ENCODE measurements at regions of chr3 and their contacts with region 1.

Region 1: DNA sequence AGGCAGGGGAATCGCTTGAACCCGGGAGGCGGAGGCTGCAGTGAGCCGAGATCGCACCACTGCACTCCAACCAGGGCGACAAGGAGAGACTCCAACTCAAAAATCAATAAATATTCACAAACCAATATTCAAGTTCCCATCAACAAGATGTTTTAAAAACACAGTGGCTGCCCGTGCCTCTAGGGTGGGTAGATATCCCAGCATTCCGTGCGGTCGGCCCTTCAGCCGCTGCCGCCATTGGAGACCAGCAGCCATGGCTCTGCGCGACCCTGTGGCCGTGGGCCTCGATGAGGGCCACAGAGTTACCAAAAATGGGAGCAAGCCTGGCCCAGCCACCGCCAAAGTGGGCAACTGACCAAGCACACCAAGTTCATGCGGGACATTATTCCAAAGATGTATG is 6.7 kb downstream of the ULK4 start:
- DNase-seq: no peak
- H3K4me3 ChIP-seq: no peak overlapping the region
- H3K27ac ChIP-seq: no peak overlapping the region
- H3K4me1 ChIP-seq: peaks cover 3% of the 10 kb centered on the region
- CTCF ChIP-seq: no peak

Region 2: DNA sequence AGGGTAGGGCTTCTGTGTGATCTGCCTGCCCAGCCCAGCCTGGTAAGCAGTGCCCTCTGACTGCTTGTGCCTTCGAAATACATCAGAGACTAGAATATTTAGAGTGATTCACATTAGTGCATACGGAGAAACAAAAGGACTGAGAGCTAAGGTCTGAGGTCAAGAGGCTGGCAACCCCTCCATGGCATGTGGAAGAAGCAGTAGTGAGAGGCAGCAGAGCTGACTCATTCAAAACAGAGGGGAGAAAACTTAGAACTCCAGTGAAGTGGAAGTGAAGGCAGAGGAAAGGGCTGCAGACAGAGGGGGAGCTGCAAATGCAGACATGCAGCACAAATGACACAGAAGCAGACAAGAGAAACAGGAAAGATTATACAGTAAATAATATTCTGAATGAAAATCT is 54.9 kb before region 1 on chr3:
- CTCF ChIA-PET with region 1: no interaction called
- POLR2A ChIA-PET with region 1: interaction called, 10 read pairs
- intact Hi-C with region 1: no loop called
- DNase-seq: no peak
- H3K4me3 ChIP-seq: no peak overlapping the region
- H3K27ac ChIP-seq: no peak overlapping the region
- H3K4me1 ChIP-seq: no peaks in the 10 kb centered on the region
- CTCF ChIP-seq: no peak

Region 3: DNA sequence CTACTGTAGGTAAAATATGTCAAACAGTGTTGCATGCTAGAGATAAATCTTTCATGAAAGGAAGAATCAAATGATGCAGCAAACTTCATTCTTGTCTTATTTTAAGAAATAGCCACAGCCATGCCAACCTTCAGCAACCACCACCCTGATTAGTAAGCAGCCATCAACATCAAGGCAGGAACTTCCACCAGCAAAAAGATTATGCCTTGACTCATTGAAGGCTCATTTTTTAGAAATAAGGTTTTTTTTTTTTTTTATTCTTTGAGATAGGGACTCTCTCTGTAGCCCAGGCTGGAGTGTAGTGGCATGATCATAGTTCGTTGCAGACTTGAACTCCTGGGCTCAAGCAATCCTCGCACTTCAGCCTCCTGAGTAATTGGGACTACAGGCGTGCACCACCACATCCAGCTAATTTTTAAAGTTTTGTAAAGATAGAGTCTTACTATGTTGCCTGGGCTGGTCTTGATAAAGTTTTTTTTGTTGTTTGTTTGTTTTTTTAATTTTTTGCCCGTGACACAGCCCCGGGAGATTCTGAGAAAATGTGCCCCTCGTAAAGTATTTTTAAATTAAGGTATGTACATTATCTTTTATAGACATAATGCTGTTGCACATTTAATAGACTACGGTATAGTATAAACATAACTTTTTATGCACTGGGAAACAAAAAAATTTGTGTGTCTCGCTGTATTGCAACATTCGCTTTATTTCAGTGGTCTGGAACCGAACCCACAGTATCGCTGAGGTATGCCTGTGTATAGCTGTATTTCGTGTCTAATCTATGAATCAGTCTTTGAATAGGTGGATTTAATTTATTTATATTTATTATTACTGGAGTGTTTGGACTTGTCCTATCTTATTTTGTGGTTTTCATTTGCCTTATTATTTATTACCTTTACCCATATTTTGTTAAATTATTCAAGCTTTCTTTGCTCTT is 1354.4 kb after region 1 on chr3:
- CTCF ChIA-PET with region 1: no interaction called
- POLR2A ChIA-PET with region 1: no interaction called
- intact Hi-C with region 1: no loop called
- DNase-seq: no peak
- H3K4me3 ChIP-seq: no peak overlapping the region
- H3K27ac ChIP-seq: no peak overlapping the region
- H3K4me1 ChIP-seq: no peaks in the 10 kb centered on the region
- CTCF ChIP-seq: no peak